ENCODE measurements at regions of chr14 and their contacts with region 1.

Region 1: DNA sequence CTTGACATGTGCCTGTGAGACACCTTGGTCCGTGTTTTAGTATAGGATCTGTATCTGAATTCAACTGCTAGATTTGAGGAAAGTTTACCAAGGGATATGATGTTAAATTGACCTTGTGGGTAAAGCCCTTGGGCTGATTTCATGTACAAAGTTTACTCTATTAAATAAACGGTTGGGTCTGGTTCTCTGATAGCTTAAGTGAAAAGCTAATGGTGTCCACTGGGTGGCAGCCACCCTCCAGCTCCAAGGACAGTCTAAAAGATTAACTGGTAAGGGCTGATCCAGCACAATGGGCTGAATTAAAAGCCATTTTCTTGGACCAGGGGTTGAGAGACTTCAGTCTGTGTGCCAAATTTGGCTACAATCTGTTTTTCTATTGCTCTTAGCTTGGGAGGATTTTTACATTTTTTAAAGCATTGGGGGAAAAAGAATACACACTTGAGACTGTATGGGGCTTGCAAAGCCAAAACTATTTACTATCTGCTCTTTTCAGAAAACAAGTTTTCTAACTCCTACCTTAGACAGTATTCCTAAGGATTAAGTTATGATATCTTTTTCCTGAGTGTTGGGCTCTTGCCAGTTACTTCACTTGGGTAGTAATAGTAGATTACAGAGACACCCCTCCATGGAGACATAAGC is 116.5 kb downstream of the GPHN start:
- DNase-seq: peak; percentile 62
- H3K4me3 Mint-ChIP-seq: no peak overlapping the region
- H3K27ac Mint-ChIP-seq: no peak overlapping the region
- H3K4me1 Mint-ChIP-seq: peaks cover 9% of the 10 kb centered on the region
- H3K27me3 Mint-ChIP-seq: no peaks in the 10 kb centered on the region
- CTCF ChIP-seq: peak; percentile 64

Region 2: DNA sequence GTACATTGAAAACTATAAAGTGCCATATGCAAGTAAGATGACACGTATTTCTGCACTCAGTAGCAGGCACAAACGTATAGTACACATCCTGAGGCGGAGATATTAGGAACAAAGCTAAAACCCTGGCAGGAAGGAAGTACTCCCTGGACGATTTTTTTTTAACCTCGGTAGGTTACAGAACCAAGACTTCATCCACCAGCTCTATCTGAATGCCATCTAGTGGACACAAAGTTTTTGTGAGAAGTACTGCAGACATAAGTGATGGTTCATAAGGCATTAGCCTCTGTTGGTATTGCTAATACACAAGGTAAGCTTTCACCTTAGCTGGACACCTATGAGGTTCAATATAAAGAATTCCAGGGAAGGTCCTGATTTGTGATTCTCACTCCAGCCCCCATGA is 221.2 kb before region 1 on chr14:
- CTCF ChIA-PET with region 1: interaction called, 3 read pairs
- intact Hi-C with region 1: loop called (anchors 1 kb)
- DNase-seq: no peak
- H3K4me3 Mint-ChIP-seq: no peak overlapping the region
- H3K27ac Mint-ChIP-seq: no peak overlapping the region
- H3K4me1 Mint-ChIP-seq: peaks cover 9% of the 10 kb centered on the region
- H3K27me3 Mint-ChIP-seq: no peaks in the 10 kb centered on the region
- CTCF ChIP-seq: peak; percentile 45

Region 3: GRCh38 chr14:66662374-66662773 is 38.0 kb after region 1 on chr14:
- CTCF ChIA-PET with region 1: interaction called, 11 read pairs
- intact Hi-C with region 1: loop called (anchors 1 kb)
- DNase-seq: peak; percentile 39
- H3K4me3 Mint-ChIP-seq: no peak overlapping the region
- H3K27ac Mint-ChIP-seq: peak overlapping the region; percentile 1
- H3K4me1 Mint-ChIP-seq: peaks cover 8% of the 10 kb centered on the region
- H3K27me3 Mint-ChIP-seq: no peaks in the 10 kb centered on the region
- CTCF ChIP-seq: peak; percentile 45

Region 4: DNA sequence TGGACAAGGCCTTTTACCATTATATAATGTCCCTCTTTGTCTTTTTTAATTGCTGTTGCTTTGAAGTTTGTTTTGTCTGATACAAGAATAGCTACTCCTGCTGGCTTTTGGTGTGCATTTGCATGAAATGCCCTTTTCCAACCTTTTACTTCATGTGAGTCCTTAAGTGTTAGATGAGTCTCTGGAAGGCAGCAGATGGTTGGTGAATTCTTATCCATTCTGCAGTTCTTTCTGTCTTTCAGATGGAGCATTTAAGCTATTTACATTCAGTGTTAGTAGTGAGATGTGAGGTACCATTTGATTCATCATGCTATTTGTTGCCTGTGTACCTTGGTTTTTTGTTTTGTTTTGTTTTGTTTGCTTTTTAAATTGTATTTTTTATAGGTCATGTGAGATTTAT is 91.8 kb after region 1 on chr14:
- CTCF ChIA-PET with region 1: no interaction called
- intact Hi-C with region 1: no loop called
- DNase-seq: no peak
- H3K4me3 Mint-ChIP-seq: no peak overlapping the region
- H3K27ac Mint-ChIP-seq: no peak overlapping the region
- H3K4me1 Mint-ChIP-seq: peaks cover 8% of the 10 kb centered on the region
- H3K27me3 Mint-ChIP-seq: no peaks in the 10 kb centered on the region
- CTCF ChIP-seq: no peak

Region 5: GRCh38 chr14:66746316-66747006 is 122.0 kb after region 1 on chr14:
- CTCF ChIA-PET with region 1: interaction called, 20 read pairs
- intact Hi-C with region 1: loop called (anchors 2 kb)
- DNase-seq: peak; percentile 58
- H3K4me3 Mint-ChIP-seq: peak overlapping the region; percentile 22
- H3K27ac Mint-ChIP-seq: no peak overlapping the region
- H3K4me1 Mint-ChIP-seq: peaks cover 9% of the 10 kb centered on the region
- H3K27me3 Mint-ChIP-seq: no peaks in the 10 kb centered on the region
- CTCF ChIP-seq: peak; percentile 45

Region 6: DNA sequence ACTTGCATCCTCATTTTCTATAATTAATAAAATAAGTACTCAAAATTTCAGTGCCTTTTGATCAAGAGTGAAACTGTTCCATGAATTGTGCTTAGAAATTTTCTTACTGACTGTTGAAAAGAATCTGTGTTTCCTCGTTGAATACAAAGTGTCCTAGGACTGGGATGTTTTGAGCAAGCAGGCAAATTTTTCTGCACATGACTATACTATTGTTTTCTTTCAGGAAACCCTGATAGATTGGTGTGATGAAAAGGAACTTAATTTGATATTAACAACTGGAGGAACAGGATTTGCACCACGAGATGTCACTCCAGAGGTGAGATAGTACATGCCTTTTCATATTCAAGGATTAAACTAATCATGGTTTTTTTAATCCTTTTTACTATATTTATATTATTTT is 199.8 kb after region 1 on chr14:
- CTCF ChIA-PET with region 1: no interaction called
- intact Hi-C with region 1: loop called (anchors 10 kb)
- DNase-seq: no peak
- H3K4me3 Mint-ChIP-seq: no peak overlapping the region
- H3K27ac Mint-ChIP-seq: no peak overlapping the region
- H3K4me1 Mint-ChIP-seq: peaks cover 11% of the 10 kb centered on the region
- H3K27me3 Mint-ChIP-seq: no peaks in the 10 kb centered on the region
- CTCF ChIP-seq: no peak

Region 7: DNA sequence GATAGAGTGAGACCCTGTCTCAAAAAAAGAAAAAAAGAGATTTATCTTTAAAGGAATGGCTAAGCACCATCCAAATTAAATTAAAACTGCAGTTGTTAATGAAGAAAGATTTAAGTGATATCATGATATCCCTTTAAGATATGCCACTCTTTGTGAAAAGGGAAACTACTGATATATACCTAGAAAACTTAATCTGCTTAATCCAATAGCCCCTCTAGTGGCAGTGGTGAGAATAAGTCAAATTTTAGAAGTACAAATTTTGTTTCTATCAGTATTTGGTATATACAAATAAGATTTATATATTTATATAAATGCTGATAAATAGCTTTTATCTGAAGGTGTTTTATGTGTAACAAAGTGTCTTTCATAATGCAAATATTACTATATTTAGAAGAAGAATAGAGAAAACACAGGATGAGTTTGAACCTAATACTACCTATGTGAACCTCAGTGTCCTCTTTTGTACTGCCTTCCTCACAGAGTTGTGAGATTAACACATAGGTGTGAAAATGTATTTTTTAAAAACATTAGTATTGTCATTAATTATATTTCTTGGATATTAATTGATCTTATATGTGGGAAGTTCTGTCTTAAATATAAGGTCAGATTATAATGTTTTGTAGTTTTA is 513.4 kb after region 1 on chr14:
- CTCF ChIA-PET with region 1: interaction called, 3 read pairs
- intact Hi-C with region 1: loop called (anchors 2 kb)
- DNase-seq: no peak
- H3K4me3 Mint-ChIP-seq: no peak overlapping the region
- H3K27ac Mint-ChIP-seq: no peak overlapping the region
- H3K4me1 Mint-ChIP-seq: no peaks in the 10 kb centered on the region
- H3K27me3 Mint-ChIP-seq: no peaks in the 10 kb centered on the region
- CTCF ChIP-seq: peak; percentile 51

Measured in Calu3 (cell line).